ENCODE measurements at regions of chr3 and their contacts with region 1.

Region 1: GRCh38 chr3:141460097-141460704 is 26.6 kb upstream of the RASA2 start:
- DNase-seq: peak; percentile 86 to 92
- ATAC-seq: peak; percentile 99 to 100
- H3K4me3 ChIP-seq: no peak overlapping the region
- H3K27ac ChIP-seq: peak overlapping the region in 1 of 2 experiments; percentile 46; a peak in 4 of 6 replicates
- H3K4me1 ChIP-seq: peaks cover 7% of the 10 kb centered on the region; the same call in 1 of the 3 replicates
- CTCF ChIP-seq: peak; percentile 95
- EP300 ChIP-seq: no peak
- POLR2A ChIP-seq: no peak
- RAD21 ChIP-seq: peak; percentile 97 to 98

Region 2: GRCh38 chr3:141321109-141321497 is 139.1 kb before region 1 on chr3:
- CTCF ChIA-PET with region 1: interaction called, 354 read pairs
- POLR2A ChIA-PET with region 1: no interaction called
- DNase-seq: no peak
- ATAC-seq: peak in 1 of 2 experiments; percentile 42; a peak in 3 of 6 replicates
- H3K4me3 ChIP-seq: no peak overlapping the region
- H3K27ac ChIP-seq: peak overlapping the region; percentile 37 to 81
- H3K4me1 ChIP-seq: peaks cover 37% of the 10 kb centered on the region
- CTCF ChIP-seq: no peak
- EP300 ChIP-seq: no peak
- POLR2A ChIP-seq: no peak
- RAD21 ChIP-seq: no peak

Region 3: GRCh38 chr3:141482250-141483017 is 22.2 kb after region 1 on chr3:
- CTCF ChIA-PET with region 1: interaction called, 22 read pairs
- POLR2A ChIA-PET with region 1: interaction called, 10 read pairs
- DNase-seq: peak; percentile 75 to 87
- ATAC-seq: peak; percentile 22 to 34; a peak in 4 of 6 replicates
- H3K4me3 ChIP-seq: no peak overlapping the region
- H3K27ac ChIP-seq: peak overlapping the region; percentile 23 to 70; a peak in 4 of 6 replicates
- H3K4me1 ChIP-seq: peaks cover 43% of the 10 kb centered on the region
- CTCF ChIP-seq: no peak
- EP300 ChIP-seq: peak in 1 of 2 experiments; percentile 62; a peak in 3 of 5 replicates
- POLR2A ChIP-seq: no peak
- RAD21 ChIP-seq: peak in 1 of 2 experiments; percentile 3; a peak in 2 of 5 replicates

Region 4: GRCh38 chr3:141523615-141524375 is 63.6 kb after region 1 on chr3:
- CTCF ChIA-PET with region 1: interaction called, 10 read pairs
- POLR2A ChIA-PET with region 1: no interaction called
- DNase-seq: no peak
- ATAC-seq: no peak
- H3K4me3 ChIP-seq: no peak overlapping the region
- H3K27ac ChIP-seq: no peak overlapping the region
- H3K4me1 ChIP-seq: peaks cover 12% of the 10 kb centered on the region; the same call in 2 of the 3 replicates
- CTCF ChIP-seq: no peak
- EP300 ChIP-seq: no peak
- POLR2A ChIP-seq: no peak
- RAD21 ChIP-seq: no peak

Region 5: GRCh38 chr3:141561426-141562034 is 101.3 kb after region 1 on chr3:
- CTCF ChIA-PET with region 1: interaction called, 337 read pairs
- POLR2A ChIA-PET with region 1: no interaction called
- DNase-seq: peak in 1 of 2 experiments; percentile 81
- ATAC-seq: peak in 1 of 2 experiments; percentile 55; a peak in 2 of 6 replicates
- H3K4me3 ChIP-seq: no peak overlapping the region
- H3K27ac ChIP-seq: peak overlapping the region in 1 of 2 experiments; percentile 39; a peak in 1 of 6 replicates
- H3K4me1 ChIP-seq: 0 out of 3 replicates have a peak, but pooled peaks cover 3% of the 10 kb centered on the region
- CTCF ChIP-seq: peak; percentile 98
- EP300 ChIP-seq: no peak
- POLR2A ChIP-seq: no peak
- RAD21 ChIP-seq: peak; percentile 98 to 99

Region 6: GRCh38 chr3:141575879-141576743 is 115.9 kb after region 1 on chr3:
- CTCF ChIA-PET with region 1: interaction called, 14 read pairs
- POLR2A ChIA-PET with region 1: no interaction called
- DNase-seq: peak; percentile 20 to 25
- ATAC-seq: peak; percentile 71 to 86; a peak in 4 of 6 replicates
- H3K4me3 ChIP-seq: no peak overlapping the region
- H3K27ac ChIP-seq: no peak overlapping the region
- H3K4me1 ChIP-seq: peaks cover 3% of the 10 kb centered on the region; the same call in 1 of the 3 replicates
- CTCF ChIP-seq: peak; percentile 58
- EP300 ChIP-seq: no peak
- POLR2A ChIP-seq: no peak
- RAD21 ChIP-seq: peak; percentile 51 to 61

Region 7: DNA sequence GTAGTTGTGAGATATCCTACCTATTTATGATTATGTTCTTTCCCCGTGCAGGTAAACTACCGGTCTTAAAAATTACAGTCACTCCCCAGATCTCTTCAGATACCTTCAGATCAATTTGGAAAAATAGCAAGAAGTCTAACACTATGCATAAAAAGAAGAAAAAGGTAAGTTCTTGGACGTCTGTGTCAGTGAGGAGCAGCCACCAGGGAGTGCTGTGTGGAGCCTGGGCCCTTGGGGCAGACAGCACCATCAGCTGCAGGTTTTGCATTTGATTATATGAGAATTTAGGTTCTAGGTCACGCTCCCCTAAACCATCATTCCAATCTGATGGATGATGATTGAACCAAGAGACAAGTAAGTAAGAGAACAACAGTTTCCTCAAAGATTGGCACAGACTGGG is 269.0 kb after region 1 on chr3:
- CTCF ChIA-PET with region 1: no interaction called
- POLR2A ChIA-PET with region 1: no interaction called
- DNase-seq: no peak
- ATAC-seq: peak in 1 of 2 experiments; percentile 44; a peak in 1 of 6 replicates
- H3K4me3 ChIP-seq: no peak overlapping the region
- H3K27ac ChIP-seq: no peak overlapping the region
- H3K4me1 ChIP-seq: no peaks in the 10 kb centered on the region; the same call in 2 of the 3 replicates
- CTCF ChIP-seq: no peak
- EP300 ChIP-seq: no peak
- POLR2A ChIP-seq: no peak
- RAD21 ChIP-seq: no peak

Measured in A549 (cell line).